HCT116 (cell line): ENCODE measurements at regions of chr1 and their contacts with region 1.

Region 1: GRCh38 chr1:185670187-185670627 is 64.0 kb upstream of the HMCN1 start:
- DNase-seq: no peak
- ATAC-seq: peak; percentile 78
- H3K4me3 ChIP-seq: no peak overlapping the region
- H3K27ac ChIP-seq: no peak overlapping the region
- H3K4me1 ChIP-seq: no peaks in the 10 kb centered on the region
- H3K27me3 ChIP-seq: no peaks in the 10 kb centered on the region
- CTCF ChIP-seq: peak; percentile 65 to 70 (median 69); a peak in 5 of 6 replicates
- POLR2A ChIP-seq: no peak
- RAD21 ChIP-seq: peak; percentile 81

Region 2: GRCh38 chr1:184805667-184806295 is 864.4 kb before region 1 on chr1:
- CTCF ChIA-PET with region 1: interaction called, 12 read pairs
- POLR2A ChIA-PET with region 1: no interaction called
- RAD21 ChIA-PET with region 1: no interaction called
- intact Hi-C with region 1: loop called (anchors 5 kb)
- DNase-seq: peak; percentile 72
- ATAC-seq: peak; percentile 100
- H3K4me3 ChIP-seq: no peak overlapping the region
- H3K27ac ChIP-seq: no peak overlapping the region
- H3K4me1 ChIP-seq: 0 out of 4 replicates have a peak, but pooled peaks cover 0 to 3% of the 10 kb centered on the region in 2 experiments
- H3K27me3 ChIP-seq: no peaks in the 10 kb centered on the region
- CTCF ChIP-seq: peak; percentile 76 to 93 (median 92)
- POLR2A ChIP-seq: no peak
- RAD21 ChIP-seq: peak; percentile 97

Region 3: DNA sequence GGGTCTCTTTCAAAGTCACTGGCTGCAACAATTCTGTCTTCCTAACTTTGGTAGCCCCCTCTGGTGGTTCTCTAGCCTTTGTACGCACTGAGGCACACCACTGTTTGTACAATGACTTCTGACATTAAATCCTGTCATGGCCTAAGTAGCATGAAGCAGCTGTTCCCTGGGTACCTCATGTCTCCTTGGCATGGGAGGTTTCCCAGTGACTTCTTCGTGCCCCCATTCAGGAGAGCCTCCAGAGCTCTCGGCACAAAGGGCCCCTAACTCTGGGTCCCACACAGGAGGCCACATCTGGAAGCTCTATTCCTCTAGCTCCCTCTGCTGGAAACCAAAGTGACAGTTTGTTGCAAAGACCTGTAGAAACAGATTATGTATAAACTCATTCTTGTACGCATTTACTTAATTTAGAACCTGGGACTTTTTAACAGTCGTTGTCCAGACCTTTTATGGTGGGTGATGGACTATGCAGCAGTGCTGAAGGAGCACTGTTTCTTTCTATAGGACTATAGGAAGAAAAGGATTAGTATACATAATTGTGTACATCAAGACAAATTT is 499.8 kb before region 1 on chr1:
- CTCF ChIA-PET with region 1: interaction called, 25 read pairs
- POLR2A ChIA-PET with region 1: no interaction called
- RAD21 ChIA-PET with region 1: no interaction called
- intact Hi-C with region 1: loop called (anchors 5 kb)
- DNase-seq: peak; percentile 56
- ATAC-seq: peak; percentile 96
- H3K4me3 ChIP-seq: no peak overlapping the region
- H3K27ac ChIP-seq: no peak overlapping the region
- H3K4me1 ChIP-seq: 0 out of 4 replicates have a peak, but pooled peaks cover 0 to 3% of the 10 kb centered on the region in 2 experiments
- H3K27me3 ChIP-seq: no peaks in the 10 kb centered on the region
- CTCF ChIP-seq: peak; percentile 68 to 98 (median 91)
- POLR2A ChIP-seq: no peak
- RAD21 ChIP-seq: peak; percentile 82

Region 4: GRCh38 chr1:185244015-185244747 is 426.0 kb before region 1 on chr1:
- CTCF ChIA-PET with region 1: interaction called, 10 read pairs
- POLR2A ChIA-PET with region 1: no interaction called
- RAD21 ChIA-PET with region 1: no interaction called
- intact Hi-C with region 1: loop called (anchors 5 kb)
- DNase-seq: no peak
- ATAC-seq: 0 out of 2 replicates have a peak, but pooled peaks have one; percentile 53
- H3K4me3 ChIP-seq: no peak overlapping the region
- H3K27ac ChIP-seq: no peak overlapping the region
- H3K4me1 ChIP-seq: 0 out of 4 replicates have a peak, but pooled peaks cover 0 to 4% of the 10 kb centered on the region in 2 experiments
- H3K27me3 ChIP-seq: no peaks in the 10 kb centered on the region
- CTCF ChIP-seq: no peak
- POLR2A ChIP-seq: no peak
- RAD21 ChIP-seq: no peak

Region 5: GRCh38 chr1:185681034-185681633 is 10.9 kb after region 1 on chr1:
- CTCF ChIA-PET with region 1: interaction called, 19 read pairs
- POLR2A ChIA-PET with region 1: no interaction called
- RAD21 ChIA-PET with region 1: interaction called in 1 of 2 experiments, 4 read pairs
- intact Hi-C with region 1: no loop called
- DNase-seq: peak; percentile 45
- ATAC-seq: peak; percentile 85
- H3K4me3 ChIP-seq: no peak overlapping the region
- H3K27ac ChIP-seq: no peak overlapping the region
- H3K4me1 ChIP-seq: no peaks in the 10 kb centered on the region
- H3K27me3 ChIP-seq: no peaks in the 10 kb centered on the region
- CTCF ChIP-seq: peak; percentile 52 to 54 (median 53); a peak in 5 of 6 replicates
- POLR2A ChIP-seq: no peak
- RAD21 ChIP-seq: peak; percentile 79